Activated T-helper 2 cell treated with anti-CD3 and anti-CD28 coated beads, Interferon-gamma antibody, Interleukin-2, Interleukin-4, amounts not matched to agents 10 μg/mL and 5 μg/mL and 100 μg/mL, durations not matched to agents 14 hours and 24 hours and 36 hours (primary cell): ENCODE measurements at regions of chr1 and their contacts with region 1.

Region 1: DNA sequence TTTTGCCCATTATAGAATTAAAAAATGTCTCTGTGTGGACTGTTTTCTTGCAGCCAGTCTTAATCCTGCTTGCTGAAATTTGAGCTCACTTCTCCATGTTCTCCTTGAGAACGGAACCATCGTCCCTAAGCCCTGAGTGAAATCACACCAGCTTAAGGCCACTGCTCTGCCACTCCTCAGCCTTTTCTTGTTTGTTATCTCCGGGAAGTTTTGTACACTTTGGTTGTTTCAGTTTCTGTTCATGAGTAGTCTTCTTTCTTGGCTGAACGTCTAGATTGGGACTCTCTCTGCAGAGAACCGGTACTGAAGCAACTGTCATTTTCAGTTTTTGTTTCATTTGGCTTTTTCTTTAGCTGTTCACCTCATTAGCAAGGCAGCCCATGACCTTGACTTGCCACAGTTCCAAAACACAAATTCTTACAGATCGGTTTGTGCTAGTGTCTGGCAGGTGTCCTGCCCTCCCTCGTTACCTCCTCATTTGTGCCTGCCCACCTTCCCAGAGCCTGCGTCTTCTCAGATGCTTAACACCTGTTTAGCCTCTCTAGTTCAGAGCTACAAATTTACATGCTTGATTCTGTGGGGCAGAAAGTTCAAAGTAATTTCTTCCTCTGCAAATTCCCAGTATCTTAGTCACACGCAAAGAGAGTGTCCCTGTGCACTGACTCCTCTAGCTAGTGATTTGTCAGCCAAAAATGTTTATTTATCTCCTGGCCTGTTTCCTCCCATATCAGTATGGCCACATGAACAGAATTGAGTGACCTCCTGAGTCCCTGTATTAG is 12.4 kb downstream of the PSEN2 start:
- DNase-seq: peak; percentile 39
- H3K4me3 Mint-ChIP-seq: peak overlapping the region; percentile 74
- H3K27ac Mint-ChIP-seq: peak overlapping the region; percentile 96
- H3K4me1 Mint-ChIP-seq: peaks cover 57% of the 10 kb centered on the region
- H3K27me3 Mint-ChIP-seq: no peaks in the 10 kb centered on the region

Region 2: DNA sequence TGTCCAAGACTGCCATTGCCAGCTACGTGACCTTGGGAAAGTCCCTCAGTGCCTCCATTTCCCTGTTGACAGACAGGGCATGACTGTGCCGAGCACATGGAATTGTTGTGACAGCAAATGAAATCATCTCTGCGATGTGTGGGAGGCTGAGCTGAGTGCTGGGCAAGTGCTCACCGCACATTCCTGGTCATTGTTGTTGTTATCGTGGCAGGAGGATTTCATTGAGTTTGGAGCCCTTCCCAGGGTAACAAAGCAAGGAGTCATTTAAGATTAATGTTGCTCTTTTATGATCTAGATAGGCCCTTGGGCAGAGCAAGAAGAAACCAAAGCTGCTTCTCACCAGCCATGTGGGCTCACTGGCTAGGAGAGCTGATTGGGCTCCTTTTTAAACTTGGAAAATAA is 104.2 kb before region 1 on chr1:
- intact Hi-C with region 1: no loop called
- DNase-seq: no peak
- H3K4me3 Mint-ChIP-seq: no peak overlapping the region
- H3K27ac Mint-ChIP-seq: no peak overlapping the region
- H3K4me1 Mint-ChIP-seq: no peaks in the 10 kb centered on the region
- H3K27me3 Mint-ChIP-seq: peaks cover 20% of the 10 kb centered on the region

Region 3: GRCh38 chr1:226870401-226871279 is 12.2 kb before region 1 on chr1 and contains the start of gene PSEN2:
- intact Hi-C with region 1: loop called (anchors 1 kb)
- DNase-seq: peak; percentile 57
- H3K4me3 Mint-ChIP-seq: peak within 1 kb of the TSS; percentile 79
- H3K27ac Mint-ChIP-seq: no peak within 1 kb of the TSS
- H3K4me1 Mint-ChIP-seq: peaks cover 23% of the 10 kb centered on the region
- H3K27me3 Mint-ChIP-seq: peaks cover 4% of the 10 kb centered on the region
- total RNA-seq, gene PSEN2: 13.9 and 17.0 TPM in 2 replicates

Region 4: GRCh38 chr1:228464487-228464983 is 1581.7 kb after region 1 on chr1:
- intact Hi-C with region 1: loop called (anchors 5 kb)
- DNase-seq: peak; percentile 93
- H3K4me3 Mint-ChIP-seq: peak overlapping the region; percentile 82
- H3K27ac Mint-ChIP-seq: peak overlapping the region; percentile 87
- H3K4me1 Mint-ChIP-seq: peaks cover 58% of the 10 kb centered on the region
- H3K27me3 Mint-ChIP-seq: peaks cover 3% of the 10 kb centered on the region